WTC11 (cell line): ENCODE measurements at regions of chr17 and their contacts with region 1.

Region 1: DNA sequence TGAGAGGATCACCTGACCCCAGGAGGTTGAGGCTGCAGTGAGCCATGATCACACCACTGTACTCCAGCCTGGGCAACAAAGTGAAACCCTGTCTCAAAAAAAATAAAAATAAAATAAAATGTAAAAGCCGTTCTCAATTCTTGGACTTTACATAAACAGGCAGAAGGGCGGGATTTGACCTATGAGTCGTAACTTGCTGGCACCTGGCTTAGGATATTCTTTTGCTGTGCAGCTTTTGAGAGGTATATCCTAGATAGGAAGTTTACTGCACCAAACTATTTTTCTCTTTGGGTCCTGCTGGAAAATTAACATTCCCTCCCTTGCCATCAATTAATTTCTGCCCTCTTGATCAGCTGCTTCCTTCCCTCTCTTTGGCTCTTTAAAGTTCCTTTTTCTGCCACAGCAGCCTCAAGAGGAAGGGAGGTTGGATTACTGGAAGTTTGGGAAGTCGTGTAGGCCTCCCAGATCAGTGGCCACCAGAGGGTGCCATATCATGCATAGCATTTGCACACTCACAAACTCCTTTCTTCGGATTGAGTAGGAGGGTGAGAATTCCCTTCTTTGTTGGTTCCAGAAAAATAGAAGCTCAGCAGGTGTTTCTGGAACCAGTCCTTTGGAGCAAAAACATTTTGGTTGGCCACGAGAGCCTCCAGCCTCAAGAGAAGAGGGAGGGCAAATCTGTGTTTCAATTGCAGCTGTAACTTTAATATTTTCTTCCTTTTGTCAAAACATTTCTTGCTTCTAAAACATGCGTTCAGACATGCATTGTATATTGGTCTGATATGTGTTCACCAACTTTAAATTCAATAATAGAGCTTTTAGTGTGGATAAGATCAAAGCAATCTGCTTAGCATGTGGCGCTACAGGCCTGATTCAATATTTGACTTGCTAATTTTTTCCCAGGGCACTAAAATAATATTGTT is 147.3 kb downstream of the CCDC182 start:
- DNase-seq: peak; percentile 80
- ATAC-seq: peak; percentile 74
- H3K4me3 Mint-ChIP-seq: no peak overlapping the region
- H3K27ac Mint-ChIP-seq: peak overlapping the region; percentile 54; the same call in 1 of the 2 replicates
- H3K4me1 Mint-ChIP-seq: peaks cover 14% of the 10 kb centered on the region
- H3K27me3 Mint-ChIP-seq: no peaks in the 10 kb centered on the region
- CTCF ChIP-seq: peak; percentile 56; the same call in 1 of the 2 replicates

Region 2: DNA sequence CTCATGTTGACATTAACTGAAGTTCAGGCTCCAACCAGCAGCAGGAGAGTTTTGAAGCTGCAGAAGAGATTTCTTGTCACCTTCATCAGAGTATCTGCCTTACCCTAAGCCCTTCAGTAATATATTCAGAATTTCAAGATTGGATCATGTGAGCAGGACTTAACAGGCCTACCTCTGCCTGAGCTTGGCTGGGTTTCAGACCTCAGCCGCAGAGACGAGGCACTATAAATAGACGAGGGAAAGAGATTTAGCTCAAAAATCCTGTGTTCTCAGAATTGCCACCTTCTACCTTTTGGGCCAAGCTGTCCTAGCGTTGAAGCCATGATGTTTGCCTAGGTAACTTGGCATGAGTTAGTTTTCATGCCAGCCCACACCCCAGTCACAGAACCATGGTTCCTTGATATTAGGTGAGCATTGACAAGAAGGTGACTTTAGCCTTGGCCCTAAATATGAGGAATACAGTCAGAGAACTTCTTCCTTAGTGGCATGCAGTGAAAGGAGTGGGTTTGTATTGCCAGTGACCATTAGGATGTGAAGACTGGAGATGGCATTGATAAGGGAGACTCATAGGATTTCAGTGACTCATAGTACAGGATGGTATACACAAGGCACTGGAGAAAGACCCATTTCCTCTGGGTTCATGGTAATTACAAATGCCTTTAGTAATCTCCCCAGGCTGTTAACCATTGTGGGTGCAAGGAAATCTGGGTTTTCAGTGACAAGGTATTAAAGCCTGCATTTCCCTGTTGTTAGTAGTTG is 117.2 kb before region 1 on chr17:
- CTCF ChIA-PET with region 1: no interaction called
- POLR2A ChIA-PET with region 1: no interaction called
- DNase-seq: no peak
- ATAC-seq: no peak
- H3K4me3 Mint-ChIP-seq: no peak overlapping the region
- H3K27ac Mint-ChIP-seq: no peak overlapping the region
- H3K4me1 Mint-ChIP-seq: peaks cover 41% of the 10 kb centered on the region
- H3K27me3 Mint-ChIP-seq: no peaks in the 10 kb centered on the region
- CTCF ChIP-seq: no peak

Region 3: DNA sequence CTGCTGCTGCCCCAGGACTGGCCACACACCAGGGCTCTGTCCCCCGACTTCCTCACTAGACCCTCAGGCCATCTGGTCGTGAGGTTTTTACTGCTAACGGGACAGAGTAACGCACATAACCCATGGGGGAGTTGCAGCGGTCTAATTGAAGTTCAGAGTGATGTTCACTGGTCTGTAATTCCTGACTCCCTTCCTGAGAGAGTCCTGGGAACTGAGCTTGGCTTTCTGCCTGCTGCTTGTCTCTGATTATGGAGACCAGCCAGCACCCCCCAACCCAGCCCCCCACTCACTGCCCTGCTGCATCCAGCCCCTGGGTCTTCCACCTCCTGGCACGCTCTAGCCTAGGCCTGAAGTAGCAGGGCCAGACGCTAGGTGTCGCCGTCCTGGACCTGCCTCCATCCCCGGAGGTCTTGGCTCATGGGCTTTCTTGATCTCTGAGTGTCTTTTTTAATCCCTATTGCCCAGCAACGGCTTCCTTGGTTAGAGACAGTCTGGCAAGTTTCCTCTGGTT is 45.6 kb before region 1 on chr17:
- CTCF ChIA-PET with region 1: interaction called, 11 read pairs
- POLR2A ChIA-PET with region 1: no interaction called
- DNase-seq: peak; percentile 81
- ATAC-seq: peak; percentile 76
- H3K4me3 Mint-ChIP-seq: no peak overlapping the region
- H3K27ac Mint-ChIP-seq: peak overlapping the region; percentile 70; the same call in 1 of the 2 replicates
- H3K4me1 Mint-ChIP-seq: peaks cover 88% of the 10 kb centered on the region
- H3K27me3 Mint-ChIP-seq: no peaks in the 10 kb centered on the region
- CTCF ChIP-seq: peak; percentile 57

Region 4: GRCh38 chr17:57577751-57578607 is 19.8 kb before region 1 on chr17:
- CTCF ChIA-PET with region 1: interaction called, 12 read pairs
- POLR2A ChIA-PET with region 1: no interaction called
- DNase-seq: no peak
- ATAC-seq: peak; percentile 61
- H3K4me3 Mint-ChIP-seq: peak overlapping the region; percentile 20; the same call in 1 of the 2 replicates
- H3K27ac Mint-ChIP-seq: 0 out of 2 replicates have a peak overlapping the region, but pooled peaks have one; percentile 28
- H3K4me1 Mint-ChIP-seq: peaks cover 27% of the 10 kb centered on the region
- H3K27me3 Mint-ChIP-seq: no peaks in the 10 kb centered on the region
- CTCF ChIP-seq: no peak

Region 5: GRCh38 chr17:57584050-57584551 is 13.7 kb before region 1 on chr17:
- CTCF ChIA-PET with region 1: interaction called, 12 read pairs
- POLR2A ChIA-PET with region 1: no interaction called
- DNase-seq: no peak
- ATAC-seq: peak; percentile 61
- H3K4me3 Mint-ChIP-seq: no peak overlapping the region
- H3K27ac Mint-ChIP-seq: no peak overlapping the region
- H3K4me1 Mint-ChIP-seq: peaks cover 25% of the 10 kb centered on the region
- H3K27me3 Mint-ChIP-seq: no peaks in the 10 kb centered on the region
- CTCF ChIP-seq: no peak

Region 6: DNA sequence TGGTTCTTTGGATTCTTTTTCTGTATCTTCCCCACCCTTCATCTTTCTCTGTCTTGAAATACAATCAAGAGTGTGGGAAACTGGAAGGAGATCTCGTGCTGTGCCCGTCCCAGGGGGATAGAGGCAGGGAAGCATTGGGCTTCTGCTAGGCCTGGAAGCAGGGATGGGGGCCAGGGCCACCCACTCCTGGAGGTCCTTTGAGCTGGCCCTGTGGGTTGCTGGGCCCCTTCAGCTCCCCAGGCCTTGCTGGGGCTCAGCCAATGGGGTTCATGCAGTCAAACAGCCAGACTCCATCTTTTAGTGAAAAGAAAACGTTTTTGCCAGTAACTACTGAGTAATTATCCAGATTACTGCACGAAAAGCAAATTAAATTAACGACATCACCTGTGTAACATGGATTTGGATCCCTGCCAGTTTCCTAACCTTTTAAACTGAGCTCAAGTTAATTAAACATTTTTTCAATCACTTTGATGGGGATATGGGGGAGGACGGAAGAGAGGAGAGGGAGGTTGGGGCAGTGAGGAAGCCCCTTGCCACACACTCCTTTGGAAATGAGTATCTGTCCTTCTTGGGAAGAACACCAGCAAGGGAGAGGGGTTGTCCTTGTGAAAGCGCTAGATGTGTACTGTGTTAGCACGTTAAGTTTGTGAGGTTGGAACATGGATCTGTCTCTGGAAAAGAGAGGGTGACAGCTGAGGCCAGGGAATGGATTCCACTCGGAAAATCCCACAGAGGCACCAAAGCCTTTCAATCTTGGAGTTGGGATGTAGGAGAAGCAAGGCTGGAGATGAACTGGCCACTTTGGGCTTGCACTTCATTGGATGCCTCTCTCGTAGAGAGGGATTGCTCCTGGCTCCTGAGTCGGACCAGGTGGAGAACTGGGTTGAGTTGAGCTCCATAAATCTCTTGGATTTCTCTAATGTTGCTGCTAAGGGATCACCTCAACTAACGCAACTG is 79.8 kb after region 1 on chr17:
- CTCF ChIA-PET with region 1: interaction called, 107 read pairs
- POLR2A ChIA-PET with region 1: no interaction called
- DNase-seq: no peak
- ATAC-seq: no peak
- H3K4me3 Mint-ChIP-seq: no peak overlapping the region
- H3K27ac Mint-ChIP-seq: no peak overlapping the region
- H3K4me1 Mint-ChIP-seq: peaks cover 10% of the 10 kb centered on the region
- H3K27me3 Mint-ChIP-seq: no peaks in the 10 kb centered on the region
- CTCF ChIP-seq: no peak

Region 7: DNA sequence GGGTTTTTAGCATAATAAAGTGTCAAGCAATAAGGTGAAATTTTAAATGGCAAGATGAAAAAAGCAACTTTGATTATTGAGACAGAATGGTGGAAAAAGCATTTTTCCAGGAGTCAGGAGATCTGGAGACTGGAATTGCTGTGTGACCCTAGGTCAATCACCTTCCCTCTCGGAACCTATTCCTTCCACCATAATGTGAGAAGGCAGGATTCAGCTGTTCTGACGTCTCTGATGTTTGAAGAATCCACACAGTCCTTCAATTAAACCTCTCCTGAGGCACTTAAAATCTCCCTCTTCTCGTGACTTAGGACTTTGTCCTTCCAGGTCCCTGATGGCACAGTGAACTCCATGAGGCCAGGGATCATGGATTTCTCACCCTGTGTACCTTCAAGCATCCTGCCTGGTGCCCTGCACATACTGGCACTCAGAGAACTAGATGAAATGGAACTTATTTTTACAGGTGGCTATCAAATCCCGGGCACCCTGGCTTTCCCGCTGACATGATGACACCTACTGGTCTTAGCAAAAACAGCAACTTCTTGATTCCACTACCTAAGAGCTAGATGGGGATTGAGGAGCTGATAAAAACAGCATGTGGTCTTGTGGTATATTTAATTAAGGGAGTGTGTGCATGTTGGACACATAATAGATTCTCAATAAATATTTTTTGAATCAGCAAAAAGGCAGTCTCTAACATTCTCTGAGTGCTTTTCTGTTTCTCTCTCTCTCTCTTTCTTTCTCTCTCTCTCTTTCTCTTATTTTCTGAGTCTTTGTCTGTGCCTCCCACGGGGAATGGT is 149.6 kb after region 1 on chr17:
- CTCF ChIA-PET with region 1: interaction called, 14 read pairs
- POLR2A ChIA-PET with region 1: no interaction called
- DNase-seq: no peak
- ATAC-seq: peak; percentile 79
- H3K4me3 Mint-ChIP-seq: no peak overlapping the region
- H3K27ac Mint-ChIP-seq: no peak overlapping the region
- H3K4me1 Mint-ChIP-seq: peaks cover 4% of the 10 kb centered on the region
- H3K27me3 Mint-ChIP-seq: no peaks in the 10 kb centered on the region; the same call in 1 of the 2 replicates
- CTCF ChIP-seq: peak; percentile 43